GM23248 (cell line): ENCODE measurements at regions of chr10 and their contacts with region 1.

Region 1: GRCh38 chr10:84540617-84541561 is 212.5 kb downstream of the CCSER2 start:
- DNase-seq: peak; percentile 89
- H3K4me3 ChIP-seq: peak overlapping the region; percentile 69
- H3K27ac ChIP-seq: peak overlapping the region; percentile 95
- H3K4me1 ChIP-seq: peaks cover 16% of the 10 kb centered on the region
- H3K27me3 ChIP-seq: no peaks in the 10 kb centered on the region; the same call in 1 of the 2 replicates

Region 2: DNA sequence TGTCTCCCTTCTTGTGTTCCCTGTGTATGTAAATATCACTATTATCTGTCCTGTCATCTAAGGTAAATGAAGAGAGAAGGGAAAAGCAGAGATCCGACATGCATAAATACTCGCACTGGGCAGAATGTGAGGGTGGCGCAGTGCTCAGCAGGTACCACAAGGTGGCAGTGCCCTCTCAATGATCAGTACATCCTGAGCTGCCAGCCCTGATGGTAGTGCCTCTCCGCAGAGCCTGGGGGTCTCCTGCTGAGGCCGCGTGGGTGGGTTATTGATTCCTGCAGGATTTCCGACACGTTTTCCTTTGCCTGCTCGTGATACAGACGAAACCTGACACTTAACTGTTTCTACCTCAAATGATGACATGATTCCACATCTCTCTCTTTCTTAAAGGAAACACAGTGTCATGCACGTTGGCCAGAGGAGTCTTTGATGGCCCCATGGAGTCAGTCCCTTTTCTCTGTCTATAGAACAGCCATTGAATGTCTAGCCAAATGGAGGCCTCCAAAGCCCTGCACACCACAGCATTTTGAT is 276.2 kb before region 1 on chr10:
- in situ Hi-C with region 1: loop called (anchors 5 kb)
- DNase-seq: peak; percentile 77
- H3K4me3 ChIP-seq: no peak overlapping the region
- H3K27ac ChIP-seq: no peak overlapping the region
- H3K4me1 ChIP-seq: peaks cover 12% of the 10 kb centered on the region
- H3K27me3 ChIP-seq: no peaks in the 10 kb centered on the region; the same call in 1 of the 2 replicates

Region 3: DNA sequence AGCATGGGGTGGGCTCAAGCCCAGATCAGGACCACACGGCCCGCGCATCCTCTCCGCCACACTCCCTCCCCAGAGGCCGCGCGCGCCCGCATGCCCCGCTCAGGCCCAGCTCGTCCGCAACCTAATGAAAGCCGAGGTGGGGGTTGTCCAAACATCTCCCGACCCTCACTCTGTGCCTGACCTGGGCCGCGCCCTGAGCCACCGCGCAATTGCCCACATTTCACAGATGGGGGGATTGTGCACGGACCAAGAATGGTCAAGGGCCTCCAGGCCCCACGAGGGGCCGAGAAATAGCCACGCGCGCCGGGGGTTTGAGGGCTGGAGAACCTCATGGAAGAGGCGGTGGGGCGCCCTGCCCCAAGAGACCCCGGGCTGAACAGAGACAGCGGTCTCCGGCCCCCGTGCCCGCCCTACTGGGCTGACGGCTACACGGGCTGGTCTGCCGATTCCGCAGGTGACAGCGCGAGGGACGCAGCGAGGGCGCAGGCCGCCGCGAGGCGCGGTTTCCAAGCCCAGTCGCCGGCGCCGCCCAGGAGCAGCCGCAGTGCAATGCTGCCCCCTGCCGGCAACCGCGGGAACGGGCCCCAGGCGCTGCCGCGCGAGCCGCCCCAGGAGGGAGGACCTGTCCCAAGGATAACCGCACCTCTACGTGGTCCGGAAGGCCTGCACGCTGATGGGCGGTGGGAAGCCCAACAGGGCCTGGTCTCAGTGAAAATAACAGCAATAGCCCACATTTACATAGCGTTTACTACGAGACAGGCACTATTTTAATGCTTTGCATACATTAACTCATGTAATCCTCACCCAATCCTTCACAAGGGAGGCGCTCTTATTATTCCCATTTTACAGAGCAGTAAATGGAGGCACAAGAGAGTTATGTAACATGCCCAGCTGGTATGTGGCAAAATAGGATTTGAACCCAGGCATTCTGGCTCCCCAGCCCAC is 1836.2 kb after region 1 on chr10:
- in situ Hi-C with region 1: loop called (anchors 10 kb)
- DNase-seq: peak; percentile 79
- H3K4me3 ChIP-seq: peak overlapping the region; percentile 43
- H3K27ac ChIP-seq: no peak overlapping the region
- H3K4me1 ChIP-seq: no peaks in the 10 kb centered on the region
- H3K27me3 ChIP-seq: peaks cover 20% of the 10 kb centered on the region